Prostate gland (tissue), 2 donors: ENCODE measurements at regions of chr21 and their contacts with region 1.

Region 1: DNA sequence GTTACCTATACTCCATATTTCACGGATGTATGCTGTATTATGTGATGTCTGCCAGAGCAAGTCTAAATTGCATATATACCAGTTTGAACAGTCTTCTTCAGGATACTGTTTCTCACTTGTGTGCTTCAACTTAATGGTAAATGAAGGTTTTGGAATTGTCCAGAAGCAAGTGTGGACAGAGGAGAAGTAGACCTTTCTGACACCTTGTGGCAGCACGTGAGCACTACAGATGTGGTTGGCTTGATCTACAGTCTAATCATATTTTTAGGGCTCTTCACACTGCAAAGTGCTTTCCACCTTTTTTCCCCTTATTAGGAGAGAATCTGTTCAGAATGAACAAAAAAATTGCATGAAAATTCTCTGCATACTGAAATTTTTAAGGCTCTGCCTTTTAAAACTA is 10.9 kb downstream of the MORC3 start:
- DNase-seq: peak; percentile 39
- H3K4me3 ChIP-seq: no peak overlapping the region
- H3K27ac ChIP-seq: peak overlapping the region in 1 of 2 donors; percentile 4
- H3K4me1 ChIP-seq: peaks cover 6% of the 10 kb centered on the region
- H3K27me3 ChIP-seq: no peaks in the 10 kb centered on the region
- CTCF ChIP-seq: peak; percentile 25 to 78 (median 66)
- POLR2A ChIP-seq: no peak

Region 2: DNA sequence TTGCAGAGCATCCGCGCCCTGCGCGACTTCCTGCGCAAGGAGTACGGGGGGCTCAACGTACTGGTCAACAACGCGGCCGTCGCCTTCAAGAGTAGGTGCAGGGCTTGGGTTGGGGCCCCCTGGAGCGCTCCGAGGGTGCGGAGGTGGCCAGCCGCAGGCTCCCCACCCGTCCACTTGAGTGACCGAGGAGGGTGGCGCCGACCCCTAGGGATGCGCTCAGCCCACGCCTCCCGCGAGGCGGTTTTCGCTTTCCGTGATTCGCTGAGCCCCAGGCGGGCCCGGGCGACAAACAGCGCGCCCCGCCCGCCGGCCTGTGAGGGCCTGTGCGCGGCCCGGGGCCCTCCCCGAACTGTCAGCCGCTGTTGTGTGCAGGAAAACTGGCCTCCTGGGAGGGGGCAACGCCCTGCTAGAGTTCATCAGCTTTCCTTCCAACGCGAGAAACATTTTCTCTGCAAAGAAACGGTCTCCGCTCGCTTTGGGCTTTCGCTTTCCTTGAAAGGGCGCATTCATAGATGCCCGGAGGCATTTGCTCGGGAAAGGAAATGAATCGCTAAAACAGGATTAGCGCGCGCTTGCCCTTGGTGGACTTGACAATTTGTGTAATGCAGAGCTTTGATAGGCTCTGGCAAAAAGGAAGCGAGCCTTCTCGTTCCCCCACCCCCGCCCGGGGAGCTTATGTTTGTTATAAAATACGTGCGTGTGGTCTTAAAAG is 195.4 kb before region 1 on chr21:
- intact Hi-C with region 1: loop called (anchors 5 kb)
- DNase-seq: peak; percentile 63
- H3K4me3 ChIP-seq: peak overlapping the region; percentile 59 to 65
- H3K27ac ChIP-seq: peak overlapping the region; percentile 83 to 88
- H3K4me1 ChIP-seq: no peaks in the 10 kb centered on the region
- H3K27me3 ChIP-seq: no peaks in the 10 kb centered on the region
- CTCF ChIP-seq: no peak
- POLR2A ChIP-seq: no peak